ENCODE measurements at regions of chr6 and their contacts with region 1.

Region 1: GRCh38 chr6:66740346-66740745 is 1033.3 kb upstream of the EYS start:
- DNase-seq: no peak
- ATAC-seq: no peak
- H3K4me3 ChIP-seq: no peak overlapping the region
- H3K27ac ChIP-seq: no peak overlapping the region
- H3K4me1 ChIP-seq: no peaks in the 10 kb centered on the region
- H3K27me3 ChIP-seq: no peaks in the 10 kb centered on the region
- CTCF ChIP-seq: no peak

Region 2: DNA sequence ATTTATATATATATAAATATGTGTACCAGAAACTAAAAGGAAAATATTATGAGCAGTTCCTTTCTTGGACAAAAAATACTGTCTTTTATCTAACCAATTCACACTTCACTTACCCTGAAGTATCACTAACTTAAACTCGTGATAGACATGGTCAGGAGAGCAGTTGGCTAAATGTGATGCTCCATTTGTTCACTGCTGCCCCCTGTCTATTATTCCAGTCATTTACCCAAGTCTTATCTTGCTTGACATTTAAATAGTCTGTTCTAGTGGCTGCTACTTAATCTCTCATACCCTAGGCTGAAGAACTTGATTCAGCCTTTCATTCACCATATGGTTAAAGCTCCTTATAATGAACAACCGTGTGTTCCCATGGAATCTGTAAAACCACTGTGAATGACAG is 243.7 kb before region 1 on chr6:
- intact Hi-C with region 1: loop called in 1 of 2 experiments (anchors 5 kb)
- DNase-seq: no peak
- ATAC-seq: no peak
- H3K4me3 ChIP-seq: no peak overlapping the region
- H3K27ac ChIP-seq: no peak overlapping the region
- H3K4me1 ChIP-seq: no peaks in the 10 kb centered on the region
- H3K27me3 ChIP-seq: no peaks in the 10 kb centered on the region
- CTCF ChIP-seq: no peak